AG04450 (cell line): ENCODE measurements at regions of chr18 and their contacts with region 1.

Region 1: GRCh38 chr18:6920099-6920899 is 190.8 kb downstream of the ARHGAP28 start:
- DNase-seq: peak; percentile 27
- H3K4me3 ChIP-seq: no peak overlapping the region
- H3K27ac ChIP-seq: no peak overlapping the region
- H3K27me3 ChIP-seq: peaks cover 6% of the 10 kb centered on the region
- CTCF ChIP-seq: peak; percentile 91

Region 2: DNA sequence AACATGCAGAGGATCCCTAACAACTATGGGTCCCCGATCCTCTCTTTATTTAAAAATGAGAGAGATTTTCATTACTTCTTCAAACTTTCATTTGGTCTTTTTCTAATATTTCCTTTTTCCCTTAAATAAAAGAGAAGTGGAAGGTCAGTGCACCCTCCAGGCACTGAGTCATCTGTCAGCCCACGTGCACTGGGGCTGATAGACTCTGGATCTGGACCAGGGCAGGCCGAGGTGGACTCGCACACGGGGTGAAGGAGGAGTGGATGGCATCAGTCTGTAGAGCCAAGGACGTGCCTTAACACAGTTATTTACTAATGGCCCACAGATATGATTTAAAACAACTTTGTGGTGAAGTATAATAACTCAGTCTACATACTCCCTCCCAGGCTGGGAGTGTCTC is 810.6 kb before region 1 on chr18:
- CTCF ChIA-PET with region 1: no interaction called
- POLR2A ChIA-PET with region 1: no interaction called
- DNase-seq: no peak
- H3K4me3 ChIP-seq: no peak overlapping the region
- H3K27ac ChIP-seq: no peak overlapping the region
- H3K27me3 ChIP-seq: no peaks in the 10 kb centered on the region
- CTCF ChIP-seq: no peak

Region 3: DNA sequence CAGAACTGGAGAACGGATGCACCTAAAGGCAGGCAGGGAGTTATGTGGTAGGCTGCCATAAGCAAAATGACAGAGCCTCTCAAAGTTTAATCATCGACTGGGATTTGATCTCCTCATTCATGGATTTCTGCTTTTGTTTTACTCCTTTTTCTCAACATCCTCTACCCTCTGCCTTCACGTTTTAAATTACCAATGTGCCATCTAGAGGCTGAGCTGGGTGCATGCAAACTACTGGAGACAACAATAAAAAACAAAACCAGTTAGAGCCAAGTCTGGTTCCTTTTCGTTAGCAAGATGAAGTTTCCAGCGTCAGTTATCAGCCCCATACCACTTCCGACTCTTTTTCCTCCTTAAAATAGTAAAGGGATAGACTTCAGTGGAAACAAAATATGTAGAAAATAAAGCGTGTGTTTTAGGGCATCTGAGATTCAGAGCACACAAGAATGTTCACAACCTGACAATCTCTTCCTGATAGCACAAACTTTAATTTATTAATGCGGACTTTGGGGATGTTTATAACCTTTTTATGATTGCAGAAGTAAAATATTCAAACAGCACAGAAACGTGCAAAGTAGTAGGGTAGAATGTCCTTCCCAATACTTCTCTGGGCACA is 80.3 kb after region 1 on chr18:
- CTCF ChIA-PET with region 1: interaction called, 13 read pairs
- POLR2A ChIA-PET with region 1: no interaction called
- DNase-seq: no peak
- H3K4me3 ChIP-seq: no peak overlapping the region
- H3K27ac ChIP-seq: no peak overlapping the region
- H3K27me3 ChIP-seq: no peaks in the 10 kb centered on the region
- CTCF ChIP-seq: peak; percentile 46

Region 4: DNA sequence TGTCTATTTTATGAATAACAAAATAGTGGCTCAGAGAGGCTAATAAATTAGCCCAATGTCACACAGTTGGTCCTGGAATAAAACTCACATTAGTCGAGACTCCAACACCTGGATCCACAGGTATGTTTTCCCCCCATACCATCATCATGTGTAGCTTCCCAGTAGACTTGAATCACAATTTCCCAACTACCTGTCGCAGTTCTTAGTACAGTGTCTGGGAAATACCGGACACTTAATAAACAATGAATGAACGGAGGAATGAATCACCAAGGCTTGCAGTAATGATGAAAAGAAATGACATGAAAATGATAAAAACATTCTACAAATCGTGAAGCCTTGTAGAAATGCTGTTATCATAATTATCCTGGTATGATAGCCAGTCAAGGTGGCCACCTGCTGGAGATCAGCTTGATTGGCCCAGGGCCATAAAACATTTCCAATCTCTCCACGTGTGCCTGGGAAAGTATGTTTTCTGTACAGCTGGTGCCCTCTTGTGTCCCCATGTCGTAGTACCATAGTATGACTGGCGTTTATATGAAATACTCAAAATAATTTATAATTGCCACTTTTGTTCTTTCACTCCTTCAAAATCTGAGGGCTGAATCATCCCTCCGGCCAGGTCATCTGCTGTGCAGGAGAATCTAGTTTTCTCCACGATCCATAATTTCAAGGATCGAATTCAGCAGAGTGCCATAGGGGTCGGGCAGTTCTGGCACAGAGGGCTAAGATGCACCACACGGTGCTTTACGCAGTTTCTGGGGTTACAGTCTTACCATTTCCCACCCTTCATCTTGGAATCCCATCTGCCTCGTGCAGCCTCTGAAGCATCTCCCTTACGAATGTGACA is 101.9 kb after region 1 on chr18:
- CTCF ChIA-PET with region 1: interaction called, 18 read pairs
- POLR2A ChIA-PET with region 1: no interaction called
- DNase-seq: no peak
- H3K4me3 ChIP-seq: no peak overlapping the region
- H3K27ac ChIP-seq: no peak overlapping the region
- H3K27me3 ChIP-seq: no peaks in the 10 kb centered on the region
- CTCF ChIP-seq: peak; percentile 42